Right cardiac atrium (tissue), 5 donors: ENCODE measurements at regions of chr4 and their contacts with region 1.

Region 1: GRCh38 chr4:70839589-70840093 is at the start of gene GRSF1:
- DNase-seq: peak; percentile 96 to 98 (median 98)
- ATAC-seq: peak; percentile 97 to 98
- H3K4me3 ChIP-seq: peak within 1 kb of the TSS; percentile 78
- H3K27ac ChIP-seq: peak within 1 kb of the TSS; percentile 79
- H3K4me1 ChIP-seq: peaks cover 2% of the 10 kb centered on the region
- H3K27me3 ChIP-seq: no peaks in the 10 kb centered on the region
- total RNA-seq, gene GRSF1: 69.1 to 81.4 (median 78.4) TPM

Region 2: GRCh38 chr4:70522576-70522975 is 317.1 kb before region 1 on chr4:
- intact Hi-C with region 1: no loop called
- DNase-seq: no peak
- ATAC-seq: no peak
- H3K4me3 ChIP-seq: no peak overlapping the region
- H3K27ac ChIP-seq: no peak overlapping the region
- H3K4me1 ChIP-seq: no peaks in the 10 kb centered on the region
- H3K27me3 ChIP-seq: no peaks in the 10 kb centered on the region

Region 3: GRCh38 chr4:70704331-70705145 is 135.1 kb before region 1 on chr4:
- intact Hi-C with region 1: loop called in 1 of 4 experiments (anchors 10 kb)
- DNase-seq: peak; percentile 87 to 95 (median 93)
- ATAC-seq: peak; percentile 92
- H3K4me3 ChIP-seq: peak overlapping the region; percentile 88
- H3K27ac ChIP-seq: peak overlapping the region; percentile 97
- H3K4me1 ChIP-seq: peaks cover 5% of the 10 kb centered on the region
- H3K27me3 ChIP-seq: no peaks in the 10 kb centered on the region

Region 4: DNA sequence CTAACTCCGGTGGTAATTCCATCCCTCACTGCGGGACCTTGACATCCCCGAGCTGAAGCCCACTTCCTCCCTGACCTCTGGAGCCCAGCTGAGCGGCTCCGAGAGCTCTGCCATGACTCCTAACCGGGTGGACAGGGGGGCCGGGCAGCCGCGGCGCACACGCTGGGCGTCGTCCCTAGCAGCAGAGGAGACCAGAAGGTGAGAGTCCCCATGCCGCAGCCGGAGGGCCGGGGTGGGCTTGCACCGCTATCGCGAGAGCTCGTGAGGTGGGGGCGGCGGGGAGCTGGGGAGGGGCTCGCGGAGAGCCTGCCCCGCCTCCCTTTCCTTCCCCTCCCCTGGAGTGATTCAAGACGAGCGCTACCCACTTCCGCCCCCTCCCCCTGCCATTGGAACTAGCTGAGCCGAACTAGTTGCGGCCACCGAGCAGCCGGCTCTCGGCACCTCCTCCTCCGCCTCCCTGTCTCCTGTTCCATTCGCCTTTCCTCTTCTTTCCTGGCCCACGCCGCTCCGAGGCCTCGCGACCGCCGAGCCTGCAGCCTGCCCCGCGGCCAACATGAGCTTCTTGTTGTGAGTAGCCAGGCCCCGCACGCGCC is 62.4 kb after region 1 on chr4 and contains the start of gene MOB1B:
- intact Hi-C with region 1: loop called in 2 of 4 experiments (anchors 5 kb)
- DNase-seq: peak; percentile 91 to 96 (median 95)
- ATAC-seq: peak; percentile 97 to 98
- H3K4me3 ChIP-seq: peak within 1 kb of the TSS; percentile 86
- H3K27ac ChIP-seq: peak within 1 kb of the TSS; percentile 92
- H3K4me1 ChIP-seq: peaks cover 1% of the 10 kb centered on the region
- H3K27me3 ChIP-seq: no peaks in the 10 kb centered on the region
- total RNA-seq, gene MOB1B: 16.9 to 26.2 (median 19.4) TPM

Region 5: GRCh38 chr4:70993181-70994068 is 153.8 kb after region 1 on chr4 and contains the start of gene DCK:
- intact Hi-C with region 1: loop called in 3 of 4 experiments (anchors 10 kb)
- DNase-seq: peak; percentile 93 to 97 (median 97)
- ATAC-seq: peak; percentile 100
- H3K4me3 ChIP-seq: peak within 1 kb of the TSS; percentile 80
- H3K27ac ChIP-seq: peak within 1 kb of the TSS; percentile 84
- H3K4me1 ChIP-seq: peaks cover 3% of the 10 kb centered on the region
- H3K27me3 ChIP-seq: no peaks in the 10 kb centered on the region
- total RNA-seq, gene DCK: 6.3 to 8.6 (median 7.2) TPM